ENCODE measurements at regions of chr11 and their contacts with region 1.

Region 1: GRCh38 chr11:102940714-102941588 is 14.6 kb downstream of the MMP13 start:
- DNase-seq: peak; percentile 43 to 66
- H3K4me3 ChIP-seq: no peak overlapping the region
- H3K27ac ChIP-seq: no peak overlapping the region
- H3K4me1 ChIP-seq: no peaks in the 10 kb centered on the region; the same call in 1 of the 2 replicates
- H3K27me3 ChIP-seq: no peaks in the 10 kb centered on the region
- CTCF ChIP-seq: peak; percentile 94

Region 2: DNA sequence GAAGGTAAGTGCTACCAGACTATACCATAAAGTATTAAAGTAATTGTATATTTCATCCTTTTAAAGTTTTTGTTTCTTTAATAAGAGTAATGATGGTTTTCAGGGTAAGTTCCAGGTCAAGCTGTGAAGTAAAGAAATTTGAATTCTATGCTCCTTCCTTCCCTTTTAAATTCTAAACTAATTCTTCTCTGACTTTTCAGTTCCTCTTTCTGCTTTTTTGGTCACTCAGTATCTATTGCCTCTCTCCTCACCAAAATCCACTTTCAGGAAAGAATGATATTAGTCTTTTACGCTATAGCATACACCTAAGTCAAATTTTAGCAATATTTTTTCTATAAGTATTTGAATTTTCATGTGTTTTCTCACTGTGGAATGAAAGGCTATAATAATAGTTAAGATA is 224.4 kb before region 1 on chr11:
- CTCF ChIA-PET with region 1: no interaction called
- POLR2A ChIA-PET with region 1: no interaction called
- intact Hi-C with region 1: no loop called
- DNase-seq: no peak
- H3K4me3 ChIP-seq: no peak overlapping the region
- H3K27ac ChIP-seq: no peak overlapping the region
- H3K4me1 ChIP-seq: no peaks in the 10 kb centered on the region
- H3K27me3 ChIP-seq: no peaks in the 10 kb centered on the region
- CTCF ChIP-seq: no peak

Region 3: GRCh38 chr11:102733232-102733875 is 207.6 kb before region 1 on chr11:
- CTCF ChIA-PET with region 1: interaction called, 3 read pairs
- POLR2A ChIA-PET with region 1: no interaction called
- intact Hi-C with region 1: loop called (anchors 1 kb)
- DNase-seq: peak; percentile 50 to 74
- H3K4me3 ChIP-seq: no peak overlapping the region
- H3K27ac ChIP-seq: no peak overlapping the region
- H3K4me1 ChIP-seq: no peaks in the 10 kb centered on the region
- H3K27me3 ChIP-seq: no peaks in the 10 kb centered on the region; the same call in 1 of the 2 replicates
- CTCF ChIP-seq: peak; percentile 98

Region 4: GRCh38 chr11:102810945-102811660 is 129.8 kb before region 1 on chr11:
- CTCF ChIA-PET with region 1: no interaction called
- POLR2A ChIA-PET with region 1: no interaction called
- intact Hi-C with region 1: loop called (anchors 1 kb)
- DNase-seq: no peak
- H3K4me3 ChIP-seq: no peak overlapping the region
- H3K27ac ChIP-seq: no peak overlapping the region
- H3K4me1 ChIP-seq: no peaks in the 10 kb centered on the region
- H3K27me3 ChIP-seq: no peaks in the 10 kb centered on the region
- CTCF ChIP-seq: peak; percentile 77

Region 5: GRCh38 chr11:102874852-102875251 is 66.1 kb before region 1 on chr11 and contains the start of gene MMP12:
- CTCF ChIA-PET with region 1: interaction called, 3 read pairs
- POLR2A ChIA-PET with region 1: no interaction called
- intact Hi-C with region 1: loop called (anchors 1 kb)
- DNase-seq: no peak
- H3K4me3 ChIP-seq: no peak within 1 kb of the TSS
- H3K27ac ChIP-seq: no peak within 1 kb of the TSS
- H3K4me1 ChIP-seq: peaks cover 8% of the 10 kb centered on the region
- H3K27me3 ChIP-seq: no peaks in the 10 kb centered on the region
- CTCF ChIP-seq: no peak
- total RNA-seq, gene MMP12: not detected in 2 replicates

Region 6: DNA sequence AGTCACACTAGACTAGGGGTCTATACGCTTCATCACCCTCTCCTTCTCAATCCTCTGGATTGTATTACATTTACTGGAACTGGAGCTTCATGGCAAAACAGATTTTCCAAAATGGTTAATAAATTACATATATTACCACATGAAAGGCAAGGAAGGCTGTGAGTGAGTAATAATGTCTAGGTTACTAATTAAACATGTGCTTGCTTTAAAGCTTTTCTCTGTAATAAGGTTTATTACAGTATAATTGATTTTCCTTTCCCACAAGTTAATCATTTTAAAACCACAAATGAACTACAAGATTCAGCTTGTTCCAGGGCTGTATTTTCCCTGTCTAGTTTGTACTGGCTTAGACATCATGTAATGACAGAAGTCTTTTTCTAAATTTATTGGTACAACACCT is 11.0 kb before region 1 on chr11:
- CTCF ChIA-PET with region 1: no interaction called
- POLR2A ChIA-PET with region 1: no interaction called
- intact Hi-C with region 1: no loop called
- DNase-seq: no peak
- H3K4me3 ChIP-seq: no peak overlapping the region
- H3K27ac ChIP-seq: no peak overlapping the region
- H3K4me1 ChIP-seq: no peaks in the 10 kb centered on the region
- H3K27me3 ChIP-seq: 0 out of 2 replicates have a peak, but pooled peaks cover 4% of the 10 kb centered on the region
- CTCF ChIP-seq: no peak

Region 7: DNA sequence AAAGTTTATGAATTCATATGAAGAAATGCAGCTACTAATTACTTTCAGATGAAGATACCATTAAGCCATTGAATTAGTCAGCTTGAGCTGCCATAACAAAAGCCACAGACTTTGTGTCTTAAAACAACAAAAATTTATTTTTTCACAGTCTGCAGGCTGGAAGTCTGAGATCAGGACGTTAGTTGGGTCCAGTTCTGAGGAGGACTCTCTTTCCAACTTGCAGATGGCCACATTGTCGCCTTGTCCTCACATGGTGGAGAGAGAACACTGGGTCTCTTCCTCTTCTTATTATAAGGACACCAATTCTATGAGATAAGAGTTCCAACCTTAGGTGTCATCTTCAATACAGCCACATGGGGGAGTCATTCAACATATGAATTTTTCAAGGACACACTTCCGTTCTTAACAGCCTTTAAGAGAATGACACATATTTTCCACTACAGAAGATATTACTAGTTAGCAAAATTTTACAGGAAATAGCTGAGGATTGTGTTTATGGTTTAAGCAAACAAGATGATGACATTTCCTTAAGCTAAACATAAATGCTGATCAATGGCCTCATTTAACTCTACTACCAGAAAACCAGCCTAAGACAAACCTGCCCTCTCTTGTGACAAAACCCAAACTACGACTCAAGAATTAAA is 95.0 kb after region 1 on chr11:
- CTCF ChIA-PET with region 1: no interaction called
- POLR2A ChIA-PET with region 1: no interaction called
- intact Hi-C with region 1: loop called (anchors 1 kb)
- DNase-seq: peak; percentile 8 to 78
- H3K4me3 ChIP-seq: no peak overlapping the region
- H3K27ac ChIP-seq: no peak overlapping the region
- H3K4me1 ChIP-seq: no peaks in the 10 kb centered on the region
- H3K27me3 ChIP-seq: no peaks in the 10 kb centered on the region
- CTCF ChIP-seq: peak; percentile 81